H1 (cell line): ENCODE measurements at regions of chr1 and their contacts with region 1.

Region 1: GRCh38 chr1:228434686-228435085 is 18.0 kb upstream of the TRIM17 start:
- DNase-seq: no peak
- H3K4me3 ChIP-seq: no peak overlapping the region
- H3K27ac ChIP-seq: no peak overlapping the region
- H3K4me1 ChIP-seq: no peaks in the 10 kb centered on the region
- H3K27me3 ChIP-seq: peaks cover 3 to 36% (median 21%) of the 10 kb centered on the region in 4 experiments; a peak in 6 of 7 replicates
- CTCF ChIP-seq: no peak
- EP300 ChIP-seq: no peak
- POLR2A ChIP-seq: no peak
- RAD21 ChIP-seq: no peak

Region 2: GRCh38 chr1:228416217-228416933 is 18.3 kb before region 1 on chr1 and contains the start of gene TRIM17:
- CTCF ChIA-PET with region 1: interaction called, 17 read pairs
- POLR2A ChIA-PET with region 1: no interaction called
- DNase-seq: peak in 1 of 2 experiments; percentile 89
- H3K4me3 ChIP-seq: peak within 1 kb of the TSS; percentile 30 to 60 (median 58)
- H3K27ac ChIP-seq: no peak within 1 kb of the TSS
- H3K4me1 ChIP-seq: peaks cover 2 to 9% (median 6%) of the 10 kb centered on the region in 4 experiments
- H3K27me3 ChIP-seq: peaks cover 3 to 64% (median 35%) of the 10 kb centered on the region in 4 experiments
- CTCF ChIP-seq: peak; percentile 55 to 63 (median 56)
- EP300 ChIP-seq: no peak
- POLR2A ChIP-seq: no peak
- RAD21 ChIP-seq: peak; percentile 33 to 46; a peak in 2 of 4 replicates
- total RNA-seq, gene TRIM17: 2.2 and 2.3 TPM in 2 replicates